PC-9 (cell line): ENCODE measurements at regions of chr4 and their contacts with region 1.

Region 1: DNA sequence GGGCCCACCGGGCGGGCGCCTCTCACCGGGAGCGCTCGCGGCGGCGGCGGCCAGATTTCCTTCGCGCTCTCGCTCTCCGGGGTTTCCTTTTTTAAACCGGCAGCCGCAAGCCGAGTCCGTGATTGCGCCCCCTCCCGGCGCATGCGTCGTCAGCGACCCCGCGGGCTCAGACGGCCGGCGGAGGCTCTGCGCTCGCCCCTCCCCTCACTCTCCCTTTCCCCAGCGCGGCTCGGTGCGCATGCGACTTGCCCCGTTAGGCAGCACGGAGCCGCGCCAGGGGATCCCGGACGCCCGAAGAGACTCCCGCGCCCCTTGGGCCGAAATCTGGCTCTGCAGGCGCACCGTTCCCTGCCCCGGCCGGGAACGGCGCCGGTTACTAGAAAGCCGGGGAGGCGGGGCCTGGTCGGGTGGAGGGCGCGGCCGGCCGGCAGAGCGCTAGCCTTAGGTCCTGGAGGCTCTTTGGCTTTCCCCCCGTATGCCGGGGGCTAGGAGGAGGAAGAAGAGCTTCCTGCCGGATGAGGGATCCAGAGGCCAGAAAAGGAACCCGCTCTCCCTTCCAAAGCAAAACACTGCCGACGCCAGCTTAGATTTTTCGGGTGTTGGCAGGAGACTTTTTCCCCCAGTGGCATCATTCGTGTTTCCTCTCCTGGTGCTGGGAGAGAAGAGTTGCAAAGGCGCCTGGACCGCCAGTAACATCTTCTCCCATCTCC is at the start of gene CLOCK:
- DNase-seq: peak; percentile 50 to 80
- H3K4me3 ChIP-seq: peak within 1 kb of the TSS; percentile 75
- H3K27ac ChIP-seq: peak within 1 kb of the TSS; percentile 80
- H3K4me1 ChIP-seq: peaks cover 41% of the 10 kb centered on the region
- H3K27me3 ChIP-seq: no peaks in the 10 kb centered on the region
- CTCF ChIP-seq: peak; percentile 58
- total RNA-seq, gene CLOCK: 13.3 and 19.4 TPM in 2 replicates

Region 2: DNA sequence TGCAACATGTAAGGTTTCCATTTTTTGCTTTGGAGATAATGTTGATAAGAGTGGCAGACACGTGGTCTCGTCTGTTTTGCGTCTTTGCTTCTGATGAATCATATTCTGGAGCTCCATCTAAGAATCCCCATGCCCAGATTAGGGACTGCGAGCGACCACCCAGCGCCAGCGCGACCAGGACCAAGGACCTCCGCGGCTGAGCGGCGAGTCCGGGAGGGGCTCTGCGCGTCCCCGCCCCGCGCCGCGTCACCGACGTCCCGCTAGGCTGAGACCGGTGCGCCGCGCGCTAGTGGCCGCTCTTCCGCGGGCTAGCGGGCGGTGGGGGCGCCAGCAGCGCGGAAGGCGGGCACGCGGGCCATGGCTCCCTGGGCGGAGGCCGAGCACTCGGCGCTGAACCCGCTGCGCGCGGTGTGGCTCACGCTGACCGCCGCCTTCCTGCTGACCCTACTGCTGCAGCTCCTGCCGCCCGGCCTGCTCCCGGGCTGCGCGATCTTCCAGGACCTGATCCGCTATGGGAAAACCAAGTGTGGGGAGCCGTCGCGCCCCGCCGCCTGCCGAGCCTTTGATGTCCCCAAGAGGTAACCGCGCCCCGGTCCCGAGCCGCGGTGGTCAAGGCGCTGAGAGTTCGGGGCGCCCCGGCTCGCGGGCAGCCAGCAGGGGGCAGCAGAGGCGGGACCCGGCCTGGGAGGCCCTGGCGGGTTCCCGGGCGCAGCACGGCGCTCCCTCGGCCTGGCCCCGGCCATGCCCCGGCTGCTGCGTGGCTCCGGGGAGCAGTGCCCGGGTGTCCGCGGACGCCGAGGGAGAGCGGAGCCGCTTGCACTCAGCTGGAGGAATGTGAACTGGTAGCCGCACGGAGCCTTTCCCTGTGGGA is 200.7 kb before region 1 on chr4 and contains the start of gene SRD5A3:
- CTCF ChIA-PET with region 1: no interaction called
- POLR2A ChIA-PET with region 1: no interaction called
- intact Hi-C with region 1: loop called (anchors 10 kb)
- DNase-seq: peak; percentile 52 to 86
- H3K4me3 ChIP-seq: peak within 1 kb of the TSS; percentile 64
- H3K27ac ChIP-seq: peak within 1 kb of the TSS; percentile 58
- H3K4me1 ChIP-seq: peaks cover 27% of the 10 kb centered on the region
- H3K27me3 ChIP-seq: no peaks in the 10 kb centered on the region
- CTCF ChIP-seq: peak; percentile 76
- total RNA-seq, gene SRD5A3: 7.3 and 9.9 TPM in 2 replicates

Region 3: GRCh38 chr4:55409468-55410171 is 137.3 kb before region 1 on chr4:
- CTCF ChIA-PET with region 1: no interaction called
- POLR2A ChIA-PET with region 1: interaction called, 19 read pairs
- intact Hi-C with region 1: no loop called
- DNase-seq: no peak
- H3K4me3 ChIP-seq: no peak overlapping the region
- H3K27ac ChIP-seq: no peak overlapping the region
- H3K4me1 ChIP-seq: no peaks in the 10 kb centered on the region
- H3K27me3 ChIP-seq: no peaks in the 10 kb centered on the region
- CTCF ChIP-seq: no peak

Region 4: GRCh38 chr4:55635741-55636655 is 89.1 kb after region 1 on chr4 and contains the start of gene NMU:
- CTCF ChIA-PET with region 1: no interaction called
- POLR2A ChIA-PET with region 1: interaction called, 10 read pairs
- intact Hi-C with region 1: loop called (anchors 5 kb)
- DNase-seq: peak; percentile 45 to 74
- H3K4me3 ChIP-seq: peak within 1 kb of the TSS; percentile 66
- H3K27ac ChIP-seq: no peak within 1 kb of the TSS
- H3K4me1 ChIP-seq: 0 out of 2 replicates have a peak, but pooled peaks cover 9% of the 10 kb centered on the region
- H3K27me3 ChIP-seq: no peaks in the 10 kb centered on the region
- CTCF ChIP-seq: no peak
- total RNA-seq, gene NMU: 22.6 and 31.3 TPM in 2 replicates

Region 5: GRCh38 chr4:55853484-55854046 is 306.7 kb after region 1 on chr4 and contains the start of gene EXOC1:
- CTCF ChIA-PET with region 1: no interaction called
- POLR2A ChIA-PET with region 1: no interaction called
- intact Hi-C with region 1: loop called (anchors 2 kb)
- DNase-seq: peak; percentile 86 to 93
- H3K4me3 ChIP-seq: peak within 1 kb of the TSS; percentile 91
- H3K27ac ChIP-seq: peak within 1 kb of the TSS; percentile 45
- H3K4me1 ChIP-seq: peaks cover 34% of the 10 kb centered on the region
- H3K27me3 ChIP-seq: no peaks in the 10 kb centered on the region
- CTCF ChIP-seq: no peak
- total RNA-seq, gene EXOC1: 23.1 and 27.1 TPM in 2 replicates